ENCODE measurements at regions of chr16 and their contacts with region 1.

Region 1: DNA sequence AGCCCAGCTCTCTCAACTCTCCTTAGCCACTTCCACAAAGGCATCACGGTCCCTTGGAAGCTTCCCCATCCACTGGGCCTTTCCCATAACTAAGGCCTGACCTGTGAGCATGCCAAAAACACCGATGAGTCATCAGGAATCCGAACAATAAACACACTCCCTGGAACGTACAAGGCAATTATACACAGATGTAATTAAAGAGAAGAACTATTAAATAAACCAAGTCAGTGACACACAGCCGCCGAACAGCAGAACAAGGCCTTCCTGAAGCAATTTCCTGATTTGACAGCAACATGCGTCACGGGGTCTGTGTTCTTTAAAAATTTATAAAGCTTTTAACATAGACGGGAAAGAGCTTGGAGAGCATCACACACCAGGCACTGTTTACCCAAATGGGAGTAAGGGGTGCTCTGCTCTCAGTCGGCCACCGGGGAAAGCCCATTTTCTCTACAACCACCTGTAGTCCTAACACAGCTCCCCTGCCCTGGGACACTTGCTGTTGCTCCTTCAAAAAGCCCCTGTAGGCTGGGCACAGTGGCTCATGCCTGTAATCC is 29.4 kb downstream of the COG7 start:
- DNase-seq: no peak
- ATAC-seq: peak; percentile 79

Region 2: GRCh38 chr16:21989133-21989532 is 1434.4 kb before region 1 on chr16:
- intact Hi-C with region 1: loop called (anchors 10 kb)
- DNase-seq: no peak
- ATAC-seq: no peak

Region 3: GRCh38 chr16:23398987-23399805 is 24.4 kb before region 1 on chr16:
- intact Hi-C with region 1: no loop called
- DNase-seq: no peak
- ATAC-seq: peak; percentile 82

Region 4: DNA sequence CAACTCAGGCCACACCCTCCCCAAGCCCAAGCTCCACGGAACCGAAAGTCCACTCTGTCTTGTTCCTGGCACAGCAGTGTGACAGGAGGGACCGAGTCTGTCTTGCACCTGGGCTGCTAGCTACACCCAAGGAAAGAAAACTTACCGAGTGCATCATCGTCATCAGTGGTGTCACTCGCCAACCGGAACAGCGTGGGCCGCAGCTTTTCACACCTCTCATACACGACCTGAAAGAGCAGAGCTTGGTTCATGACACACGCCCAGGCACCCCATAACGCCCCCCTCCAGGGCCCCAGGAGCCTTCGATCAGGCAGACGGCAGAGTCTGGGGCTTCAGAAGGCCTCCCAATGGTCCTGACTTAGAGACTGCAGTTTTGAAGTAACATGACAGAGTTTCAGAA is 59.2 kb after region 1 on chr16:
- intact Hi-C with region 1: no loop called
- DNase-seq: no peak
- ATAC-seq: no peak

Measured in Right ventricle myocardium inferior (tissue), 1 donor.